CD8-positive, alpha-beta T cell (primary cell): ENCODE measurements at regions of chr7 and their contacts with region 1.

Region 1: GRCh38 chr7:65006094-65006992 is at the start of gene ERV3-1:
- DNase-seq: peak; percentile 87 to 96 (median 92)
- ATAC-seq: peak; percentile 98
- H3K4me3 ChIP-seq: peak within 1 kb of the TSS; percentile 76 to 87
- H3K4me3 Mint-ChIP-seq: peak within 1 kb of the TSS; percentile 93
- H3K27ac ChIP-seq: peak within 1 kb of the TSS; percentile 84
- H3K27ac Mint-ChIP-seq: peak within 1 kb of the TSS; percentile 95
- H3K4me1 ChIP-seq: peaks cover 19% of the 10 kb centered on the region
- H3K4me1 Mint-ChIP-seq: peaks cover 42% of the 10 kb centered on the region
- H3K27me3 ChIP-seq: no peaks in the 10 kb centered on the region
- H3K27me3 Mint-ChIP-seq: no peaks in the 10 kb centered on the region
- CTCF ChIP-seq: no peak
- total RNA-seq, gene ERV3-1: 16.4 to 17.2 TPM

Region 2: GRCh38 chr7:63900394-63901203 is 1105.7 kb before region 1 on chr7:
- CTCF ChIA-PET with region 1: no interaction called
- POLR2A ChIA-PET with region 1: no interaction called
- intact Hi-C with region 1: loop called in 1 of 2 experiments (anchors 2 kb)
- DNase-seq: peak; percentile 82 to 94 (median 88)
- ATAC-seq: peak; percentile 93
- H3K4me3 ChIP-seq: peak overlapping the region; percentile 67 to 98
- H3K4me3 Mint-ChIP-seq: peak overlapping the region; percentile 92
- H3K27ac ChIP-seq: peak overlapping the region; percentile 83 to 96
- H3K27ac Mint-ChIP-seq: peak overlapping the region; percentile 93
- H3K4me1 ChIP-seq: peaks cover 4% of the 10 kb centered on the region
- H3K4me1 Mint-ChIP-seq: peaks cover 6% of the 10 kb centered on the region
- H3K27me3 ChIP-seq: no peaks in the 10 kb centered on the region
- H3K27me3 Mint-ChIP-seq: no peaks in the 10 kb centered on the region
- CTCF ChIP-seq: no peak

Region 3: DNA sequence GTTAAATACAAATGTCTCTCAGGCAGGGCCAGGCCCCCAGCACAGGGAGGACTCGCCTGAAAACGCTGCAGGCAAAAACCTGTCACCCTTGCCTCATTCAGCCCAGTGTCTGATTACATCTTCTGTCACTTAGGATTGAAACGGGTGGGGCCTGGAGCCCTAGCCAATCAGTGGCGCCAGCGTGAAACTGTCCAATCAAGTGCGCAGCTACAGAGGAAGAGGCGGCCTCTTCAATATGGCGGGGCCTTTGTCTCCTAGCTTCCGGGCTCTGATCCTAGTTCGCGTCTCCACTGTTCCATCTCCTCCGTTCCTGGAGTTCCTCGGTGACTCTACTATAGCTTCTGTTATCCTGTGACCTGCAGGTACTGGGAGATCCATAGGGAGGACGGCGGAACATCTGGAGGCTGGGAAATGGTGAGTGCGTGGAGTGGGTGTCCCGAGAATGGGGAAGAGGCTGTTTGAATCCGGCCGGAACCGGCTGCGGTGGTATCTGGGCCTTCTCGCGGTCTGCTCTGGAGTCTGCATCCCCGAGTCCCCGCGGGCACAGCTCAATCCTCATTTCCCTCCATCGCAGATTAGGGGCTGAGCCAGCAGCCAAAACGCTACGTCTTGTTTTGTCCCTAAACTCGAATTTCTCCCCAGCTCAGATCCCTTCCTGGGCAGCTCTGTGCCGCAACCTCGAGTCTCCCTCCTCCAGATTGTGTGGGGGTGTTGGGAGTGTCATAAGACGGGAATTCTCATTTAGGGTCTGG is 692.4 kb before region 1 on chr7 and contains the start of gene ZNF736:
- CTCF ChIA-PET with region 1: no interaction called
- POLR2A ChIA-PET with region 1: interaction called, 7 read pairs
- intact Hi-C with region 1: loop called in 1 of 2 experiments (anchors 10 kb)
- DNase-seq: peak; percentile 71 to 94 (median 86)
- ATAC-seq: peak; percentile 100
- H3K4me3 ChIP-seq: peak within 1 kb of the TSS; percentile 66 to 98
- H3K4me3 Mint-ChIP-seq: peak within 1 kb of the TSS; percentile 99
- H3K27ac ChIP-seq: peak within 1 kb of the TSS; percentile 76 to 88
- H3K27ac Mint-ChIP-seq: peak within 1 kb of the TSS; percentile 98
- H3K4me1 ChIP-seq: peaks cover 25% of the 10 kb centered on the region
- H3K4me1 Mint-ChIP-seq: peaks cover 32% of the 10 kb centered on the region
- H3K27me3 ChIP-seq: no peaks in the 10 kb centered on the region
- H3K27me3 Mint-ChIP-seq: no peaks in the 10 kb centered on the region
- CTCF ChIP-seq: no peak
- total RNA-seq, gene ZNF736: 23.4 to 26.6 TPM

Region 4: DNA sequence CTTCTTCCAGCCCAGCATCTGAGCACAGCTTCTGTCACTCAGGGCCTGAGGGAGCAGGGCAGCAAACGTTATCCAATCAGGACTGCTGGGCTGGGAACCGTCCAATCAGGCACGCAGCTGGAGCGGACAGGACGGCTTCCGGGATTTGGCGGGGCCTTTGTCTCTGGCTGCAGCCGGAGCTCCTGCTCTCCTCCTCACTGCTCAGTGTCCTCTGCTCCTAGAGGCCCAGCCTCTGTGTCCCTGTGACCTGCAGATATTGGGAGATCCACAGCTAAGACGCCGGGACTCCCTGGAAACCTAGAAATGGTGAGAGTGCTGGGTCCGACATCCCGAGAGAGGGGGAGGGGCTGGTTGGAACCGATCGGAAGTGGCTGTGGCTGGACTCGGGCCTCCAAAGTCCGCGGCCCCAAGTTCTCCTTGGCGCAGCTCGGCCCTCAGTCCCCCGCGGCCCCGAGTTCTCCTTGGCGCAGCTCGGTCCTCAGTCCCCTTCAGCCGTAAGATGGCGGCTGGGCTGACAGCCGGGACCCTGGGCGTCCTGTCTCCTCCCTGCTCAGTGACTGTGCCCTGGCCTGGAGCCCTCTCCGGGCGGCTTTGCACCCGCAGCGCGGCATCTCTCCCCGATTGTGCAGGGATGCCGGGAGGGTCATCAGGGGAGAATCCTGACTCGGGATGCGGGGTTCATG is 340.2 kb before region 1 on chr7 and contains the start of gene ZNF107:
- CTCF ChIA-PET with region 1: no interaction called
- POLR2A ChIA-PET with region 1: interaction called, 5 read pairs
- intact Hi-C with region 1: loop called in 1 of 2 experiments (anchors 1 kb)
- DNase-seq: peak; percentile 73 to 94 (median 86)
- ATAC-seq: peak; percentile 95
- H3K4me3 ChIP-seq: peak within 1 kb of the TSS; percentile 93 to 95
- H3K4me3 Mint-ChIP-seq: peak within 1 kb of the TSS; percentile 96
- H3K27ac ChIP-seq: peak within 1 kb of the TSS; percentile 92 to 93
- H3K27ac Mint-ChIP-seq: peak within 1 kb of the TSS; percentile 96
- H3K4me1 ChIP-seq: peaks cover 14% of the 10 kb centered on the region
- H3K4me1 Mint-ChIP-seq: peaks cover 64% of the 10 kb centered on the region
- H3K27me3 ChIP-seq: no peaks in the 10 kb centered on the region
- H3K27me3 Mint-ChIP-seq: no peaks in the 10 kb centered on the region
- CTCF ChIP-seq: no peak
- total RNA-seq, gene ZNF107: 14.0 to 14.7 TPM

Region 5: DNA sequence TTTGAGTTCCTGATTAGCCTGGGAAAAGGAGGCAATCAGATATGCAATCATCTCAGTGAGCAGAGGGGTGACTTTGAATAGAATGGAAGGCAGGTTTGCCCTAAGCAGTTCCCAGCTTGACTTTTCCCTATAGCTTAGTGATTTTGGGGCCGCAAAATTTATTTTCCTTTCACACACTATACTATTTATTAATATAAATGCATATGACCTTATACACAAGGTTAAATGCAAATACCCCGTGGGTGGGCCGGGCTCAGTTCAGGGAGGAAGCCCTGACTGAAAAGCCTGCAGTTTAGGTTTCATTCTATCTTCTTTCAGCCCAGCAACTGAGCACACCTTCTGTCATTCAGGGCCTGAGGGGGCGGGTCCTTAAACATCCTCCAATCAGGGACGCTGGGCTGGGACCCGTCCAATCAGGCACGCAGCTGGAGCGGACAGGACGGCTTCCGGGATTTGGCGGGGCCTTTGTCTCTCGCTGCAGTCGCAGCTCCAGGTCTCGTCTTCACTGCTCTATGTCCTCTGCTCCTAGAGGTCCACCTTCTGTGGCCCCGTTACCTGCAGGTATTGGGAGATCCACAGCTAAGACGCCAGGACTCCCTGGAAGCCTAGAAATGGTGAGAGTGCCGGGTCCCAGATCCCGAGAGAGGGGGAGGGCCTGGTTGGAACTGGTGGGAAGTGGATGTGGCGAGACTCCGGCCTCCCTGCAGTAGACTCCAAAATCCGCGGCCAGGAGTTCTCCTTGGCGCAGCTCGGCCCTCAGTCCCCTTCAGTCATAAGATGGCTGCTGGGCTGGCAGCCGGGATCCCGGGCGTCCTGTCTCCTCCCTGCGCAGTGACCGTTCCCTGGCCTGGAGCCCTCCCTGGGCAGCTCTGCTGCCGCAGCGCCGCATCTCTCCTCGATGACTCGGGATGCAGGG is 103.3 kb before region 1 on chr7 and contains the start of gene ZNF273:
- CTCF ChIA-PET with region 1: no interaction called
- POLR2A ChIA-PET with region 1: interaction called, 9 read pairs
- intact Hi-C with region 1: loop called (anchors 1 to 5 kb)
- DNase-seq: peak; percentile 82 to 94 (median 89)
- ATAC-seq: peak; percentile 100
- H3K4me3 ChIP-seq: peak within 1 kb of the TSS; percentile 71 to 98
- H3K4me3 Mint-ChIP-seq: peak within 1 kb of the TSS; percentile 97
- H3K27ac ChIP-seq: peak within 1 kb of the TSS; percentile 53 to 86
- H3K27ac Mint-ChIP-seq: peak within 1 kb of the TSS; percentile 96
- H3K4me1 ChIP-seq: peaks cover 30% of the 10 kb centered on the region
- H3K4me1 Mint-ChIP-seq: peaks cover 48% of the 10 kb centered on the region
- H3K27me3 ChIP-seq: no peaks in the 10 kb centered on the region
- H3K27me3 Mint-ChIP-seq: no peaks in the 10 kb centered on the region
- CTCF ChIP-seq: no peak
- total RNA-seq, gene ZNF273: 8.7 to 9.9 TPM

Region 6: DNA sequence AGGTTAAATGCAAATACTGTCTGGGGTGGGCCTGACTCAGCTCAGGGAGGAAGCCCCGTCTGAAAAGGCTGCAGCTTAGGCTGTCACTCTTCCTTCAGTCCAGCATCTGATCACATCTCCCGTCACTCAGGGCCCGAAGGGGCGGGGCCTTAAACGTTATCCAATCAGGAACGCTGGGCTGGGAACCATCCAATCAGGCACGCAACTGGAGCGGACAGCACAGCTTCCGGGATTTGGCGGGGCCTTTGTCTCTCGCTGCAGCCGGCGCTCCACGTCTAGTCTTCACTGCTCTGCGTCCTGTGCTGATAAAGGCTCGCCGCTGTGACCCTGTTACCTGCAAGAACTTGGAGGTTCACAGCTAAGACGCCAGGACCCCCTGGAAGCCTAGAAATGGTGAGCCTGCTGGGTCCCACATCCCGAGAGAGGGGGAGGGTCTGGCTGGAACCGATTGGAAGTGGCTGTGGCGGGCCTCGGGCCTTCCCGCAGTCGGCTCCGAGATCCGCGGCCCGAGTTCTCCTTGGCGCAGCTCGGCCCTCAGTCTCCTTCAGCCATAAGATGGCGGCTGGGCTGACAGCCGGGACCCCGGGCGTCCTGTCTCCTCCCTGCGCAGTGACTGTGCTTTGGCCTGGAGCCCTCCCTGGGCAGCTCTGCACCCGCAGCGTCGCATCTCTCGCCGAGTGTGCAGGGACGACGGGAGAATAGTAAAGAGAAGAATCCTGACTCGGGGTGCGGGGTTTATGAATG is 367.4 kb after region 1 on chr7 and contains the start of gene ZNF92:
- CTCF ChIA-PET with region 1: no interaction called
- POLR2A ChIA-PET with region 1: interaction called, 9 read pairs
- intact Hi-C with region 1: loop called (anchors 1 to 10 kb)
- DNase-seq: peak; percentile 90 to 97 (median 95)
- ATAC-seq: peak; percentile 98
- H3K4me3 ChIP-seq: peak within 1 kb of the TSS; percentile 91 to 98
- H3K4me3 Mint-ChIP-seq: peak within 1 kb of the TSS; percentile 94
- H3K27ac ChIP-seq: peak within 1 kb of the TSS; percentile 79 to 90
- H3K27ac Mint-ChIP-seq: peak within 1 kb of the TSS; percentile 93
- H3K4me1 ChIP-seq: peaks cover 24% of the 10 kb centered on the region
- H3K4me1 Mint-ChIP-seq: peaks cover 52% of the 10 kb centered on the region
- H3K27me3 ChIP-seq: no peaks in the 10 kb centered on the region
- H3K27me3 Mint-ChIP-seq: no peaks in the 10 kb centered on the region
- CTCF ChIP-seq: no peak
- total RNA-seq, gene ZNF92: 31.6 to 37.3 TPM

Region 7: DNA sequence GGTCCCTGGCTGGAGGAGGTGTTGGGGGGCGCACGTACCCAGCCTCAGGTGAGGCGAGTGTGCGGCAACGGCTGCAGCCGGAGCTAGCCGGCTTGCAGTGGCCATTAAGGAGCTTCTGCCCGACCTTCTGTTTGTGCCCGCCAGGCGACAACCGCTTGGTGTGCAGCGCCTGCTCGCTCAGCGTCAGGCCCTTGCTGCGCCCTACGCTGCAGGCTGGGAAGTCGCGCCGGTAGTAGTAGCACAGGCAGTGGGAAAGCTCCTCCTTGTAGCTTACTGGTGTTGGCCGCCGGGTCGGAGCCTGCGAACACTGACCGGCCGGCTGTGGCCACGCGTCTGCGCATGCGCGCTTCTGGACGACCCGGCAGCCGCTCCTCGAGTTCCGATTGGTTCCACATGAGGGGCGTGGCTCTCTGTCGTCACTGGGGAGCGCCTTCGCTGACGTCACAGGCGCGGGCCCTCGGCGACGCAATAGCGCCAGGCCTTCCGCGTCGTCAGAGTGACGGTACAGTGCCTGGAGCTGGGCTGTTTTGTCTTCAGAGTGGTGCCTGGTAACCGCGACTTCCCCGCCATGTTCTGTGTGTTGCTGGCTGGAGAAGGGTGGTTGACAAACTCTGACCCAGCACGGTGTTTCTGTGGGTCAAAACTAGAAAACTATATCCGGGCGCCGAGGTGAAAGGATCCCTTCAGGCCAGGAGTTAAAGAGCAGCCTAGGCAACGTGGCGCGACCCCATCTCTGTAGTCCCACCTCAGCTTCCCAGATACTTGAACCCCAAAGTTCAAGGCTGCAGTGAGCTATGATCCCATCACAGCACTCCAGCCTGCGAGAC is 1838.4 kb after region 1 on chr7:
- CTCF ChIA-PET with region 1: no interaction called
- POLR2A ChIA-PET with region 1: no interaction called
- intact Hi-C with region 1: loop called in 1 of 2 experiments (anchors 10 kb)
- DNase-seq: peak; percentile 98 to 100 (median 99)
- ATAC-seq: peak; percentile 87
- H3K4me3 ChIP-seq: peak overlapping the region; percentile 90 to 96
- H3K4me3 Mint-ChIP-seq: peak overlapping the region; percentile 97
- H3K27ac ChIP-seq: peak overlapping the region; percentile 97 to 98
- H3K27ac Mint-ChIP-seq: peak overlapping the region; percentile 100
- H3K4me1 ChIP-seq: peaks cover 13% of the 10 kb centered on the region
- H3K4me1 Mint-ChIP-seq: peaks cover 25% of the 10 kb centered on the region
- H3K27me3 ChIP-seq: no peaks in the 10 kb centered on the region
- H3K27me3 Mint-ChIP-seq: no peaks in the 10 kb centered on the region
- CTCF ChIP-seq: peak; percentile 53